Natural killer cell (primary cell): ENCODE measurements at regions of chr3 and their contacts with region 1.

Region 1: DNA sequence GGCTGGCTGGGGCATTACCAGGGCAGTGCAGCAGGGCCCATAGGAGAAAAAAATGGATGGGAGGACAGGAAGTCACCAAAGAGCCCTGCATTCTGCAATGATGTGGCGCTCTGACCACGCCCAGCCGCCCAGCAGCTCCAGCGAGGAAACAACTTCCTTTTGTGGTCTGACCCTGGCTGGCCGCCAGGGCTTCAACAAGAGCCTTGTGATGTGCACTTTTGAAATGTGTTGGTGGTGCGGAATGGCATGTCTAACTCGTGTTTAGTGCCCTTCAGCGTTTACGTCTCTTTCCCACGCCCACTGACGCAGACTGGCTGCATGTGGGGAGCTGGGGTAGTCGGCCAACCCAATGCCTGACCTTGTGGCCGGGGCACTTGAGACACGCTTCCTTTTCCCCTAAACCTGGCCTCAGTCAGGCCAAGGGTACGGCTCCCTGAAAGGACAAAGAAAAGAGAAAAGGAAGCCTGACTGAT is 81.9 kb upstream of the CTNNB1 start:
- DNase-seq: peak; percentile 78 to 93
- ATAC-seq: peak; percentile 71 to 88 (median 88)
- H3K4me3 ChIP-seq: no peak overlapping the region
- H3K4me3 Mint-ChIP-seq: peak overlapping the region; percentile 70
- H3K27ac ChIP-seq: peak overlapping the region; percentile 91
- H3K27ac Mint-ChIP-seq: peak overlapping the region; percentile 90 to 94
- H3K4me1 ChIP-seq: peaks cover 22% of the 10 kb centered on the region
- H3K4me1 Mint-ChIP-seq: peaks cover 28 to 29% of the 10 kb centered on the region in 2 donors
- H3K27me3 ChIP-seq: no peaks in the 10 kb centered on the region
- H3K27me3 Mint-ChIP-seq: no peaks in the 10 kb centered on the region
- CTCF ChIP-seq: no peak

Region 2: GRCh38 chr3:40971191-40972168 is 146.0 kb before region 1 on chr3:
- intact Hi-C with region 1: loop called (anchors 5 kb)
- DNase-seq: peak; percentile 25 to 34
- ATAC-seq: peak; percentile 71 to 80 (median 73)
- H3K4me3 ChIP-seq: no peak overlapping the region
- H3K4me3 Mint-ChIP-seq: no peak overlapping the region
- H3K27ac ChIP-seq: peak overlapping the region; percentile 90
- H3K27ac Mint-ChIP-seq: peak overlapping the region; percentile 78 to 87
- H3K4me1 ChIP-seq: peaks cover 34% of the 10 kb centered on the region
- H3K4me1 Mint-ChIP-seq: peaks cover 27 to 36% of the 10 kb centered on the region in 2 donors
- H3K27me3 ChIP-seq: no peaks in the 10 kb centered on the region
- H3K27me3 Mint-ChIP-seq: peaks cover 2 to 5% of the 10 kb centered on the region in 2 donors
- CTCF ChIP-seq: no peak

Region 3: DNA sequence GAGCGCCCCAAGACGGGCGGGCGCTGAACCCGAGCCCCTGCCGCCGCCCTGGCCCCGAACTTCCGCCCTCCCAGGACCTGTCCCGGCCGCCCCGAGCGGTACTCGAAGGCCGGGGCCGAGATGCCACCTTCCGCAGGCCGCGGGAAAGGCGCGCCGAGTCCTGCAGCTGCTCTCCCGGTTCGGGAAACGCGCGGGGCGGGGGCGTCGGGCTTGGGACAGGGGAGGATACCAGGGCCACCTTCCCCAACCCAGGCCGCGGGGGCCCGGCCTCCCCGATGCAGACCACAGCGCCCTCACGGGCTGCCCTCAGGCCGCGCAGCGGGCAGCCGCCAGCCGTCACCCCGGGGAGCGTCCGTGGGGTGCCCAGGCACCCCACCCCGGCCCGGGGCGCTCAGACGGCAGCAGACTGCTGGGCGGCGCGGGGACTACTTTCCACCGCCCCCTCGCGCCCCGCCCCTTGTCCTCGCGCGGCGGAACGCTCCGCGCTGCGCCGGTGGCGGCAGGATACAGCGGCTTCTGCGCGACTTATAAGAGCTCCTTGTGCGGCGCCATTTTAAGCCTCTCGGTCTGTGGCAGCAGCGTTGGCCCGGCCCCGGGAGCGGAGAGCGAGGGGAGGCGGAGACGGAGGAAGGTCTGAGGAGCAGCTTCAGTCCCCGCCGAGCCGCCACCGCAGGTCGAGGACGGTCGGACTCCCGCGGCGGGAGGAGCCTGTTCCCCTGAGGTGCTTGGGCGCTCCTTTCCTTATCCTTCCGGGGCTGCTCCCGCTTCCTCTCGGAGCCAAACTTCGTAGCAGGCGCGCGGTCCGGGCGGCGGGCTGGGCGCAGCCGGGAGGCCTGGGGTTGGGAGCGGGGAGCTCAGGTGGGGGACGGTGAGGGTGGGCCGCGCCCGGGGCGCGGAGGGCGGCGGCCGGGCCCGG is 81.8 kb after region 1 on chr3 and contains the start of gene CTNNB1:
- intact Hi-C with region 1: loop called (anchors 1 kb)
- DNase-seq: peak; percentile 89 to 96
- ATAC-seq: peak; percentile 84 to 95 (median 85)
- H3K4me3 ChIP-seq: peak within 1 kb of the TSS; percentile 100
- H3K4me3 Mint-ChIP-seq: peak within 1 kb of the TSS; percentile 97
- H3K27ac ChIP-seq: peak within 1 kb of the TSS; percentile 99
- H3K27ac Mint-ChIP-seq: peak within 1 kb of the TSS; percentile 91 to 97
- H3K4me1 ChIP-seq: peaks cover 8% of the 10 kb centered on the region
- H3K4me1 Mint-ChIP-seq: peaks cover 43 to 47% of the 10 kb centered on the region in 2 donors
- H3K27me3 ChIP-seq: no peaks in the 10 kb centered on the region
- H3K27me3 Mint-ChIP-seq: peaks cover 7 to 26% of the 10 kb centered on the region in 2 donors
- CTCF ChIP-seq: no peak
- total RNA-seq, gene CTNNB1: 213 to 258 (median 230) TPM